ENCODE measurements at regions of chr17 and their contacts with region 1.

Region 1: DNA sequence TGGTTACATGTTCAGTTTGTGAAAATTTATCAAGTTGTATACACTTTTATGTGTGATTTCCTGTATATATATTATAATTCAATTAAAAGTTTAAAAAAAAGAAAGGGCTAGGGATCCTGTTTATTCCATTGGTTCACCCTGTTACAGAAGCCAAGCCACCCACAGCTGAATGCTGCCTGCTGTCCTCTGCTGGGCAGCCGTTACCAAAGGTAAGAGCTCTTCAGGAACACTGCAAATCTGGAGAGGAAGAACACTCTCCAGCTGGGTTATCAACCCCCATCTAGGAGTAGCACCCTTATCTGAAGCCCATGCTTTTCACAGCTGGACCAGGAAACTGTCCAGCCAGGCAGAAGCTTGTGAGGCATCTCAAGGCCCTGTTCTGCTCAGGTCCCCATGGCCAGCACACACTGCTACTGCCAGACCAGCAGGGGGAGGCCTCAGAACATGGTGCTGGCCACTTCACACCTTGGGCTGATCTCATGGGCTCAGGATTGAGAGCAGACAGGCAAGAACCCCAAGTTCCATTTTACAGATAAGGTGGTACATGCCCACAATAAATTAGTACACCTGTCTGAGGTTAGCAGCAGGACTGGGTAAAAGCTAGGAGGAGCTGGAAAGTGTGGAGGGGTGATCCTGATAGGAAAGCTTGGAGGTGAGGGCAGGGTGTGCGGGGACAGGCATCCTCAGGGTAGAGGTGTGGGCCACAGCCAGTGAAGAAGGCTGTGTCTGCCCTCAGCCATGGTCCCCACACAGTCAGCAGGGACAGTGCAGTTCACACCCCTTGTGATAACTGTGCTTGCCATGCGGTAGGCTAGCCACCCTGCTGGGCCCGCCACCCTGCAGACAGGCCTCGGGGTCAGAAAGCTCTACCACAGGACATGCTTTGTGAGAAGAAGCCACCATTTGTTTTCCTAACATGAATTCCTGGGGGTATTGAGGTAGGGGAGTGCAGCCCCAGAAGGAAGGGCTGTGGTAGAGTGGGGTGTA is 54.3 kb upstream of the SREBF1 start:
- DNase-seq: no peak
- H3K4me3 ChIP-seq: no peak overlapping the region
- H3K27me3 ChIP-seq: no peaks in the 10 kb centered on the region
- CTCF ChIP-seq: peak; percentile 95

Region 2: DNA sequence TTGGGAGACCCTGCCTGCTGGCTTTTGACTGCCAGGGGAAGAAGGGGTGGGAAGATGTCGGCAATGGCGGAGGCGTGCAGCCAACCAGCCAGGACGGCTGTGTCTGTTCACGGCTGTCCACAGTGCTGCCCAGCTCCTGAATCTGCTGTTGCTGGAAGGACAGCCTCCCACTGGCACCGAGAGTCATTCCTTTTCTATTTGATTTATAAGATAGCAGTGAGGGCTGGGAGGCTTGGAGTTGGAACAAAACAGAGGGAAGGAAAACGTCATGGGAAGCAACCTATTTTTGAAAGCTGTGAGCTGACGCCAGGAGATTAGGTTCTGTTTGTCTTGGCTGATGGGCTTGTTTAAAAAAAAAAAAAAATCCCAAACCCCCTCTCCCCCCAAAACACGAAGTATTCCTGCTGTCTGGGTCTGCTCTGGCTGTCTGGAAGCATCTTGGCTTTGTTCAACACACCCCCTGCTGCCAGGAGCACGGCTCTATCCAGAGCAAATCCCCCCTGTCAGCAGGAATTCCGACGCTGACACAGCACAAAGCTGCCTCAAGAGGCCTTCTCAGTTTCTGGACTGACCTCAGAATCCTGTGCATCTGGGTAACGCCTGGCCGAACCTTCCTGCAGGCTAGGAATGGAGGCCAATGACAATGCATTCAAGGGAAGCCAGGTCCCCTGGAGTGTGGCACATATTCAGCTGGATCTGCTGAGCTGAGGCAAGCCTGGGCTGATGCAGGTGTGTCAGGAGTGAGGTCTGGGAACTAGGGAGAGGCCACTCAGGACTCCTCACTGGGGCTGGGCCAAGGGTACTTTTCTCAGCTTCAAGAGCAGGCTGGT is 13.3 kb before region 1 on chr17:
- CTCF ChIA-PET with region 1: interaction called, 19 read pairs
- POLR2A ChIA-PET with region 1: no interaction called
- DNase-seq: peak; percentile 64
- H3K4me3 ChIP-seq: no peak overlapping the region
- H3K27me3 ChIP-seq: no peaks in the 10 kb centered on the region
- CTCF ChIP-seq: peak; percentile 25

Region 3: DNA sequence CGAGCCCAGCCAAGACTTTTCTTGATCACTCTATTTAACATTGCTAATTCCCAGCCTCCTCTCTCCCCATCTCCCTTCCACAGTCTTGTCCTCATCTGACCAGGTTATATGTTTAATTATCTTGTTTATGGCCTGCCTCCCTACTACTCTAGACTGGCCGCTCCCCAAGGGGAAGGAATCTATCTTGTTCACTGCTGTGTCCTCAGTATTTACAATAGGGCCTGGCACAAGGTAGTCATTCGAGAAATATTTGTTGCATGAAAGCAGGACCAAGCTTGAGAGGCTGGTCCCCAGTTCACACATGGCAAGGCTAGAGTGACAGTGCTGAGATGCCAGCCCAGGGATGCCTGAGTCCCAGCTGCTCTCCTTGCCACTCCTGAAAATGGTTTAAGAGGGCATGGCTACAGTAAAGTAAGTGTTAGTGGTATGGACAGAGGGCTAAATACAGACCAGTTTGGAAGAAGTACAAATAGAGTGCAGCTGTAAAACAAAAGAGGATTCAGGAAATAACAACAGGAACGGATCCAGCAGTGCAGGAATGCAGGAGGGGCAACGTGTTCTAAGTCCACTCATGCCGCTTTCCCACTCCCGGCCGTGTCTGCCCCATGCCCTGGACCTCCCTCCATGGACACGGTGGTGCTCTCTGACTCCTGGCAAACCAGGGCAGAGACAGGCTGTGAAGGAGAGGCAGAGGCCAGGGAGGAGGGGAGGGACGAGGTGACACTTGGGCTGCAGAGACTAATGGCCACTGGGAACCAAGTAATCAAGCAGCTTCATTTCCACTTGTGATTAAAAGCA is 15.6 kb after region 1 on chr17:
- CTCF ChIA-PET with region 1: interaction called, 13 read pairs
- POLR2A ChIA-PET with region 1: no interaction called
- DNase-seq: no peak
- H3K4me3 ChIP-seq: no peak overlapping the region
- H3K27me3 ChIP-seq: no peaks in the 10 kb centered on the region
- CTCF ChIP-seq: no peak

Region 4: DNA sequence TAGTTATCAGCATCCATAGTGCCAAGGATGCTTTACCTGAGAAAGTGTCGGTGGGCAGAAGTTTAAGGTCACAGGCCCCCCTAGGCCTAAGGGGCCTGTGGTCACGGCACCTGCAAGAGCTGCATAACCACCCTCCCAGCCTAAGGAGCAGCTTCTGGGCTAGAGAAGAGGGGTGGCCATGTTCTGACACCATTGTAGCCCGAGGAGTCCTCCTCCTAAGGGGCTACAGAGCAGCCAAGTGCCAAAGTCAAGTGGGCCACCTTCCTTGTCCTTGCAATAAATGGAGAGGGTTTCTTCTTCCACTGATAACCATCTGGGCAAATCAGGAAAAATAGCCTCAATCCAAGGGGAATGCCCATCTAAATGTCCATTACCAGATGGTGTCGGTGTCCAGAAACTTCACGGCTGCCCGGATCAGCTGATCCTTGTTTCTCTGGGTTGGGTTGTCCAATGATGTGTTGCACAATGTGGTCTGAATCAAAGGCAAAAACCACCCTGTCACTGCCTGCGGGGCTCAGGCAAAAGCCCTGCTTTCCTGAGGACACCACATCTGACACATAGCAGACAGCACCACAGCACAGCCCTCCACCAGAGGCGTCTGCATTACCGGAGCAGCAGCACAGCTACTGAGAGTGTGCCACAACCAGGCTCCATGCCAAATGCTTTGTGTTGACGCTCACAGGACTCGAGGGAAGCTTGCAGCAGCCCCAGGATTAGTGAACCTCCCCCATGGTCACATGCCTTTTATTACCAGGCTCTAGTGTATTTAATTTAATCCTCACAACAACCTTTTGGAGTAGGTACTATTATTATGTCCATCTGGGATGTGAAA is 135.1 kb after region 1 on chr17:
- CTCF ChIA-PET with region 1: interaction called, 46 read pairs
- POLR2A ChIA-PET with region 1: no interaction called
- DNase-seq: no peak
- H3K4me3 ChIP-seq: no peak overlapping the region
- H3K27me3 ChIP-seq: no peaks in the 10 kb centered on the region
- CTCF ChIP-seq: 0 out of 2 replicates have a peak, but pooled peaks have one; percentile 8

Region 5: DNA sequence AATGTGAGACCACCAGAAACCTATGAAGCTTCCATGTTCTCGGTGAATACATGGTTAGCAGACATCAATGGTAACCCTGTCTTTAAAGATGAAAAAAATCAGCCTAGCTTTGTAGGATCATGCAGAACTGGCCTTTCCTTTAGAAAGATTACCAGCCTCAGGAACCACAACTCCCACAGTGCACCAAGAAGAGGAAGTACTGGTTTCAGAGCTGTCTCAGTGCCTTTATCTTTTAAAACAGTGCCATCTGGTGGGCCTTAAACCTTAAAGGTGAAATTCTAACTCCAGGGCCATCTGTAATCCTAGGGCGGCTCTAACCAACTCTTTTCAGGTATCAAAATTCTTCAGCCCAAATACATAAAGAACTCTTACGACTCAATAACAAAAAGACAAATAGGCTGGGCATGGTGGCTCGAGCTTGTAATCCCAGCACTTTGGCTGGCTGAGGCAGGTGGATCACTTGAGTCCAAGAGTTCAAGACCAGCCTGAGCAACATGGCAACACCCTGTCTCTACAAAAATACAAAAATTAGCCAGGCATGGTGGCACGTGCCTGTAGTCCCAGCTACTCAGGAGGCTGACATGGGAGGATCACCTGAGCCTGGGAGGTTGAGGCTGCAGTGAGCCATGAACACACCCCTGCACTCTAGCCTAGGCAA is 142.5 kb after region 1 on chr17:
- CTCF ChIA-PET with region 1: interaction called, 46 read pairs
- POLR2A ChIA-PET with region 1: no interaction called
- DNase-seq: no peak
- H3K4me3 ChIP-seq: no peak overlapping the region
- H3K27me3 ChIP-seq: no peaks in the 10 kb centered on the region
- CTCF ChIP-seq: peak; percentile 52

Region 6: DNA sequence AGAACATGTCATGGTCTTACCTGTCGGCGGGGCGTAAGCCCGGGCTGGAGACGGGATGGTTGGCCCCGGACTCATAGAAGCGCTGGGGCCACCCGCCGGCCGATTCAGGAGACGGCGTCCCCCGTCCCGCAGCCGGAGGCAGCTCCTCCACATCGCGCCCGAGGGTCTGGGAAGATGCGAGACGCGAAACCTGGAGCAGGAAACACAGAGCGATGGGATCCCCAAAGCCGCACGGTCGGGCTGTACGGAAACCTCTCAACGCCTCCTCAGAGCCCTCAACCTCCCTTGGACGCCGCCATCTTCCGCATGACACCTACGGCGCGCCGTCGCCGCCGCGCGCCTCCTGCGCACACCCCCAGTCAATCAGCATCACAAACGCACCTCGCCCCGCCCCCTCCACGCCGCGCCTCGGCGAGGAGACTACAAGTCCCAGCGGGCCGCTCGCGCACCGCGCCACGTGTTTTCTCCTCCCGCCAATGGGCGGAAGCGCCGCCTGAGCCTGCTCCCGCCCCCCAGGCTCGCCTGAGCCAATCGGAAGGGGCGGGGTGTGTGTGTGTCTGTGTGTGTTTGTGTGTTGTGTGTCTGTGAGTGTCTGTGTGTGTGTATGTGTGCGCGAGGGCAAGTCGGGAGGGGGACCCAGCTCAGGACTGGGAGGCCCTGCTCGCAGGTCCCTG is 147.9 kb after region 1 on chr17 and contains the starts of genes ATPAF2 and GID4:
- CTCF ChIA-PET with region 1: interaction called, 46 read pairs
- POLR2A ChIA-PET with region 1: no interaction called
- DNase-seq: peak; percentile 87
- H3K4me3 ChIP-seq: peak within 1 kb of the TSS; percentile 77
- H3K27me3 ChIP-seq: no peaks in the 10 kb centered on the region
- CTCF ChIP-seq: peak; percentile 28; the same call in 1 of the 2 replicates
- polyA plus RNA-seq, gene ATPAF2: 14.7 and 17.4 TPM in 2 replicates
- polyA plus RNA-seq, gene GID4: 6.9 and 7.4 TPM in 2 replicates

Region 7: DNA sequence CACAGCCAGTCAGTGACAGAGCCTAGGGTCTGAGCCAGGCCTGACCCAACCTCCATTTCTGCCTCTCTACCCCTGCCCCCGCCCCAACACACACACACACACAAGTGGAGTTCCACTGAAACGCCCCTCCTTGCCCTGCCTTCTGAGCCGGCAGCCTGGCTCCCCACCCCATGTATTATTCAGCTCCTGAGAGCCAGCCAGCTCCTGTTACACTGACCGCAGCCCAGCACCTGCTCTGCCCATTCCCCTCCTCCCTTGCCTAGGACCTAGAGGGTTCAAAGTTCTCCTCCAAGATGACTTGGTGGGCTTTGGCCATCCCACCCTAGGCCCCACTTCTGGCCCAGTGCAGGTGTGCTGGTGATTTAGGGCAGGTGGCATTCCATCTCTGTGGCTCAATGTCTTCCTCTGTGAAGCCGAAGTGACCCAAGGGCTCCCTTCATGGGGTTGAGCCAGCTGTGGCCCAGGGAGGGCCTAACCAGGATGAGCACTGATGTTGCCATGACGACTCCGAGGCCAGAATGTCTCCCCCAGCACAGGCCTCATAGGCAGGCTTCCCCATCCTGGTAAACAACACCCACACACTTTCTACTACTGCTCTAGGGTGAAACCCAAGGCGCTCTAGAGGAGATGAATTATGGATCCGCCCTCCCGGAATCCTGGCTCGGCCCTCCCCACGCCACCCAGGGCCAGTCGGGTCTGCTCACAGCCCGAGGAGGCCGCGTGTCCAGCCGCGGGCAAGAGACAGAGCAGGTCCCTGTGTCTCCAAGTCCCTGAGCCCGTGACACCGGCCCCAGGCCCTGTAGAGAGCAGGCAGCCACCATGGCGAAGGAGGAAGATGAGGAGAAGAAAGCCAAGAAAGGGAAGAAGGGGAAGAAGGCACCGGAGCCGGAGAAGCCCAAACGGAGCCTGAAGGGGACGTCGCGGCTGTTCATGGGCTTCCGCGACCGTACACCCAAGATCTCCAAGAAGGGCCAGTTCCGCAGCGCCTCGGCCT is 227.2 kb after region 1 on chr17:
- CTCF ChIA-PET with region 1: no interaction called
- POLR2A ChIA-PET with region 1: no interaction called
- DNase-seq: no peak
- H3K4me3 ChIP-seq: no peak overlapping the region
- H3K27me3 ChIP-seq: no peaks in the 10 kb centered on the region
- CTCF ChIP-seq: no peak